Caco-2 (cell line): ENCODE measurements at regions of chr2 and their contacts with region 1.

Region 1: GRCh38 chr2:102155642-102156491 is 13.3 kb downstream of the IL1R1 start:
- DNase-seq: peak; percentile 85 to 90
- H3K4me3 ChIP-seq: no peak overlapping the region
- H3K4me3 Mint-ChIP-seq: peak overlapping the region; percentile 56
- H3K27ac Mint-ChIP-seq: peak overlapping the region; percentile 84
- H3K4me1 ChIP-seq: peaks cover 51% of the 10 kb centered on the region
- H3K4me1 Mint-ChIP-seq: peaks cover 58% of the 10 kb centered on the region
- H3K27me3 ChIP-seq: no peaks in the 10 kb centered on the region
- H3K27me3 Mint-ChIP-seq: no peaks in the 10 kb centered on the region
- CTCF ChIP-seq: no peak

Region 2: DNA sequence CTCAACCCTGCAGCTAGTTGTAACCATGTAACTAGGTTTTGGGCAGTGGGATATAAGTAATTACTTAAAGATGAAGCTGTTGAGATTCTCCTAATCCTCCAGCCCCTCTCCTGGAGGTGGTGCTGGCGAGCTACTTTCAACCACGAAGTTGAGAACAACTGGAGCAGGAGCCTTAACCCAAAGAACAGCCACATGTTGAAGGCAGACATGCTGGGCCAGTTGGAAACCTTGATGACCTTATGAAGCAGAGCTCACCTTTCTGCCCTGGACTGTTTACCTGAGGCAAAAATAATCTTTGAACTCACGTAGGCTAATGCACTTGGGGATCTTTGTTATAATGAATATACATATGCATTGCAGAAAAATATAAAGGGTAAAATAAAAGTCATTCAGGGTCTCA is 1425.5 kb before region 1 on chr2:
- CTCF ChIA-PET with region 1: no interaction called
- POLR2A ChIA-PET with region 1: no interaction called
- intact Hi-C with region 1: no loop called
- DNase-seq: peak; percentile 49 to 55
- H3K4me3 ChIP-seq: no peak overlapping the region
- H3K4me3 Mint-ChIP-seq: no peak overlapping the region
- H3K27ac Mint-ChIP-seq: no peak overlapping the region
- H3K4me1 ChIP-seq: no peaks in the 10 kb centered on the region
- H3K4me1 Mint-ChIP-seq: no peaks in the 10 kb centered on the region
- H3K27me3 ChIP-seq: no peaks in the 10 kb centered on the region
- H3K27me3 Mint-ChIP-seq: peaks cover 14% of the 10 kb centered on the region
- CTCF ChIP-seq: peak; percentile 27 to 37

Region 3: GRCh38 chr2:101717071-101717845 is 438.6 kb before region 1 on chr2:
- CTCF ChIA-PET with region 1: no interaction called
- POLR2A ChIA-PET with region 1: no interaction called
- intact Hi-C with region 1: no loop called
- DNase-seq: no peak
- H3K4me3 ChIP-seq: no peak overlapping the region
- H3K4me3 Mint-ChIP-seq: no peak overlapping the region
- H3K27ac Mint-ChIP-seq: no peak overlapping the region
- H3K4me1 ChIP-seq: peaks cover 8% of the 10 kb centered on the region; the same call in 1 of the 2 replicates
- H3K4me1 Mint-ChIP-seq: peaks cover 40% of the 10 kb centered on the region
- H3K27me3 ChIP-seq: no peaks in the 10 kb centered on the region
- H3K27me3 Mint-ChIP-seq: no peaks in the 10 kb centered on the region
- CTCF ChIP-seq: no peak

Region 4: DNA sequence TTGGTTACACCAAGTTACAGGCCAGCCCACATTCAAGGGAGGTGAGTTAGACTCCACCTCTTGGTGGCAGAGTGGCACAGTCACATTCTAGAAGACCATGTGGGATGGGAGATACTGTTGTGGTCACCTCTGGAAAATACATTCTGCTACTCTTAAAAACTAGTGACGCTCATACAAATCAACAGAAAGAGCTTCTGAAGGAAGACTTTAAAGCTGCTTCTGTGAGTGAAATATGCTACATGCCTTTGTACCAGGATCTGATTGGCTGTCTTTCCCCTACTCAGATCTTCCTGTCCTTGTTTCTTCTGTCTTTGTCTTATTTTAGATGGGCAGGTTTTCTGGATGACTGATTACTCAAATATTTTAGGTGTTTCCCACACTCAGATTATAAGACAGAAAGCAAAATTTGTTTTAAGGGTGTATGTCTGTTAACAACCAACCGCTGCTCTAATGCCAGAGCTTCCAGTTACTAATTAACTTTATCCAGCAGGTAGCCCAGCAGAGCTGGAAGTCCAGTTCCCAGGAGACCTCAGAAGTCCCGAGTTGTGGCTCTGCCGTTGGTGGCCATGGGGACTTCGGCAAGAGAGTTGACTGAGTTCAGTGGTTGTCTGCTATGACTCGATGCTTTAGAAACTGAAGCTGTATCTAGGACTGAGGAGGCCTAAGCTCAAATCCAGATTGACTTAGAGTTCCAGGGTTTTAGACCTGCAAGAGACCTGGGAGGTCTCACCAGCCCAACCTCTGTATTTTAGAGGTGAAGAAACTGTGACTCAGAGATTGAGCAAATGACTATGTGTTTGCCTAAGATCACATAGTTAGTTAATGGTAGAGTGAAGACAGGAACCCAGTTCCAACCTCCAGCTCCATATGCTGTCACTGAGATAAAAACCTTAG is 156.7 kb before region 1 on chr2:
- CTCF ChIA-PET with region 1: interaction called, 4 read pairs
- POLR2A ChIA-PET with region 1: interaction called, 3 read pairs
- intact Hi-C with region 1: loop called (anchors 1 kb)
- DNase-seq: peak; percentile 77 to 82
- H3K4me3 ChIP-seq: peak overlapping the region; percentile 21
- H3K4me3 Mint-ChIP-seq: peak overlapping the region; percentile 61
- H3K27ac Mint-ChIP-seq: peak overlapping the region; percentile 58
- H3K4me1 ChIP-seq: peaks cover 49% of the 10 kb centered on the region
- H3K4me1 Mint-ChIP-seq: peaks cover 7% of the 10 kb centered on the region
- H3K27me3 ChIP-seq: no peaks in the 10 kb centered on the region
- H3K27me3 Mint-ChIP-seq: no peaks in the 10 kb centered on the region
- CTCF ChIP-seq: peak in 1 of 2 experiments; percentile 24

Region 5: GRCh38 chr2:102063941-102064678 is 91.8 kb before region 1 on chr2:
- CTCF ChIA-PET with region 1: no interaction called
- POLR2A ChIA-PET with region 1: no interaction called
- intact Hi-C with region 1: loop called (anchors 1 kb)
- DNase-seq: peak; percentile 73 to 86
- H3K4me3 ChIP-seq: no peak overlapping the region
- H3K4me3 Mint-ChIP-seq: no peak overlapping the region
- H3K27ac Mint-ChIP-seq: peak overlapping the region; percentile 69
- H3K4me1 ChIP-seq: peaks cover 33% of the 10 kb centered on the region
- H3K4me1 Mint-ChIP-seq: peaks cover 36% of the 10 kb centered on the region
- H3K27me3 ChIP-seq: no peaks in the 10 kb centered on the region
- H3K27me3 Mint-ChIP-seq: no peaks in the 10 kb centered on the region
- CTCF ChIP-seq: no peak

Region 6: DNA sequence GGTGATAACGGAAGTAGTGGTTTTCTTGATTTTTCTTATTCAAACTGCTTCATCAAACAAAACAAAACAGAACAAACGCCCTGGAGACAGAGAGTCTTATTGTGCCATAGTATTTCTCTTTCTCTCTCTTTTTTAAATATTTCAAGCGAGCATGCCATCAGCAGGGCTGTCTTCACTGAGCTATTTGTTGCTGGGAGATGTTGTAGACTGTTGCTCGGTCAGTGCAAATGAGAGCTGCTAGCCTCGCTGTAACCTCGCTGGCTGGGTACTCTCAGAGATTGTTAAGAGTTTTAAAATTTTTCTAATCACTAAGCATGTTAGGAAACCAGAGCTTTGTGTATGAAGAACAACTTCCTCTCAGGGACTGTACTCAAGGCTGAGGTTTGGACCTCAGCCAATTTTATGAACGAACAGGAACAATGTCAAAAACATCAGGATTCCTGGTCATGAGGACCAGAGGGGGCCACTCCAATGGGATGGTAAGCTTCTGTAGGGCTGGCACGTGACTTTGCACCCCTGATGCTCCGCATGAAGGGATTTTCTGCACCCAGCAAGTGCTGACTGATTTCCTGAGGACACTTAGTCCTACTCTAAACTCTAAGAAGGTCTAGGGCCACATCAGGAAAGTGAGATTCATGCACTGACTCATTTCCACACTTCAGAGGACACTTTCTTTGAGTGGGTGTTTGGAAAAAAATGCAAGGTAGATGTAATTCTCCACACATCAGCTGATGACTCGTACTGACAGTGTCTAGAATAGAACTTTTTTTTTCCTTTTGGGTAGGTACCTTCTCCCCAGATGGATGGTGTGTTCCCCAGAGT is 73.1 kb before region 1 on chr2:
- CTCF ChIA-PET with region 1: no interaction called
- POLR2A ChIA-PET with region 1: no interaction called
- intact Hi-C with region 1: no loop called
- DNase-seq: no peak
- H3K4me3 ChIP-seq: no peak overlapping the region
- H3K4me3 Mint-ChIP-seq: no peak overlapping the region
- H3K27ac Mint-ChIP-seq: no peak overlapping the region
- H3K4me1 ChIP-seq: no peaks in the 10 kb centered on the region
- H3K4me1 Mint-ChIP-seq: no peaks in the 10 kb centered on the region
- H3K27me3 ChIP-seq: no peaks in the 10 kb centered on the region
- H3K27me3 Mint-ChIP-seq: no peaks in the 10 kb centered on the region
- CTCF ChIP-seq: no peak

Region 7: DNA sequence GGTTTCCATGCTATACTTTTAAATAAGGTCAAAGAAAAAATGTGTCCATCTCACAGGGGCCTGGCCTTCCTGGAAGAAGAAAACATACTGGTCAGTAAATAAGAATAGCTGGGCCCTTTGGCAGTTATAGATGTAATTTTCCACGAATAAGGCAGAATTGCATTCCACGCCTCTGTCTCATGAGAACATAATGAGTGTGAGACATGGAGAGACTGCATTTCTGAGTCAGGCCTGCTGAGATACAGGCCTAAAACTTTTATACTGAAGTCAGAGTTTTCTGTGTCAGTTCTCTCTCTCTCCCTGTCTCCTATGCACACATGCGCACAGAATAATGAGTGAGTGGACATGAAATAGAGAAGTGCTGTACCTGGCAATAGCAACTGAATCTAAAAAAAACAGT is 33.8 kb before region 1 on chr2:
- CTCF ChIA-PET with region 1: no interaction called
- POLR2A ChIA-PET with region 1: no interaction called
- intact Hi-C with region 1: loop called (anchors 2 kb)
- DNase-seq: no peak
- H3K4me3 ChIP-seq: no peak overlapping the region
- H3K4me3 Mint-ChIP-seq: no peak overlapping the region
- H3K27ac Mint-ChIP-seq: no peak overlapping the region
- H3K4me1 ChIP-seq: 0 out of 2 replicates have a peak, but pooled peaks cover 5% of the 10 kb centered on the region
- H3K4me1 Mint-ChIP-seq: no peaks in the 10 kb centered on the region
- H3K27me3 ChIP-seq: no peaks in the 10 kb centered on the region
- H3K27me3 Mint-ChIP-seq: no peaks in the 10 kb centered on the region
- CTCF ChIP-seq: no peak

Region 8: GRCh38 chr2:102166189-102166845 is 10.4 kb after region 1 on chr2:
- CTCF ChIA-PET with region 1: interaction called, 21 read pairs
- POLR2A ChIA-PET with region 1: no interaction called
- intact Hi-C with region 1: no loop called
- DNase-seq: peak in 1 of 2 experiments; percentile 58
- H3K4me3 ChIP-seq: no peak overlapping the region
- H3K4me3 Mint-ChIP-seq: no peak overlapping the region
- H3K27ac Mint-ChIP-seq: no peak overlapping the region
- H3K4me1 ChIP-seq: peaks cover 11% of the 10 kb centered on the region
- H3K4me1 Mint-ChIP-seq: peaks cover 2% of the 10 kb centered on the region
- H3K27me3 ChIP-seq: no peaks in the 10 kb centered on the region
- H3K27me3 Mint-ChIP-seq: no peaks in the 10 kb centered on the region
- CTCF ChIP-seq: peak; percentile 60 to 80

Region 9: DNA sequence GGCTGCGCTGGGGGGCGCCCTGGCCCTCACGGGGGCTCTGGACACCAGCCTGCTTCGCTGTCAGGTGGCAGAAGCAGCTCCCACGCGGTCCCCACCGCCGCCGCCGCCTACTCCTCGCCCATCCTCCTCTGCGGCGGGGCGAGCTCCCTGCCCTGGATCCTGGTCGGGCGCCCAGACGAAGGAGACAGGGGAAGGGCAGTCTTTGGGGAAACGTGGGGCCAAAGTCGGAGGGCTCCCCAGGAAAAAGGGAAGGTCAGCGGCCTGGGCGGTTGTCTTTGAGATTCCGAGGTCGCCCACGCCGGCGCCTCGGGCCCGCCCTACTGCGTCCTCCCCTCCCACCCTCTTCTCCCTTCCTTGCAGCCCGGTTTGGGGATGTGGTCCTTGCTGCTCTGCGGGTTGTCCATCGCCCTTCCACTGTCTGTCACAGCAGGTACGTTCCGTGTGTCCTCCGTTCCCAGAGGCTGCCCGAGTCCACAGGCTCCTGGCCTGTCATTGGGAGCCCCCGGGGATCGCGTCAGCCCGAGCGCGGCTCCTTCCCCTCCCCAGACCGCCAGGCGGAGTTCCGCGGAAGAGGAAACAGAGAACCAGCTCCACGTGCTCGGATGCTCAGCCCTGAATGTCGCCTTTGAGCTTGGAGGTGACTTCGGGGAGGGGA is 31.8 kb after region 1 on chr2:
- CTCF ChIA-PET with region 1: no interaction called
- POLR2A ChIA-PET with region 1: no interaction called
- intact Hi-C with region 1: no loop called
- DNase-seq: no peak
- H3K4me3 ChIP-seq: no peak overlapping the region
- H3K4me3 Mint-ChIP-seq: no peak overlapping the region
- H3K27ac Mint-ChIP-seq: no peak overlapping the region
- H3K4me1 ChIP-seq: peaks cover 14% of the 10 kb centered on the region
- H3K4me1 Mint-ChIP-seq: peaks cover 8% of the 10 kb centered on the region
- H3K27me3 ChIP-seq: no peaks in the 10 kb centered on the region
- H3K27me3 Mint-ChIP-seq: no peaks in the 10 kb centered on the region
- CTCF ChIP-seq: no peak